CD8-positive, alpha-beta T cell (primary cell): ENCODE measurements at regions of chr1 and their contacts with region 1.

Region 1: DNA sequence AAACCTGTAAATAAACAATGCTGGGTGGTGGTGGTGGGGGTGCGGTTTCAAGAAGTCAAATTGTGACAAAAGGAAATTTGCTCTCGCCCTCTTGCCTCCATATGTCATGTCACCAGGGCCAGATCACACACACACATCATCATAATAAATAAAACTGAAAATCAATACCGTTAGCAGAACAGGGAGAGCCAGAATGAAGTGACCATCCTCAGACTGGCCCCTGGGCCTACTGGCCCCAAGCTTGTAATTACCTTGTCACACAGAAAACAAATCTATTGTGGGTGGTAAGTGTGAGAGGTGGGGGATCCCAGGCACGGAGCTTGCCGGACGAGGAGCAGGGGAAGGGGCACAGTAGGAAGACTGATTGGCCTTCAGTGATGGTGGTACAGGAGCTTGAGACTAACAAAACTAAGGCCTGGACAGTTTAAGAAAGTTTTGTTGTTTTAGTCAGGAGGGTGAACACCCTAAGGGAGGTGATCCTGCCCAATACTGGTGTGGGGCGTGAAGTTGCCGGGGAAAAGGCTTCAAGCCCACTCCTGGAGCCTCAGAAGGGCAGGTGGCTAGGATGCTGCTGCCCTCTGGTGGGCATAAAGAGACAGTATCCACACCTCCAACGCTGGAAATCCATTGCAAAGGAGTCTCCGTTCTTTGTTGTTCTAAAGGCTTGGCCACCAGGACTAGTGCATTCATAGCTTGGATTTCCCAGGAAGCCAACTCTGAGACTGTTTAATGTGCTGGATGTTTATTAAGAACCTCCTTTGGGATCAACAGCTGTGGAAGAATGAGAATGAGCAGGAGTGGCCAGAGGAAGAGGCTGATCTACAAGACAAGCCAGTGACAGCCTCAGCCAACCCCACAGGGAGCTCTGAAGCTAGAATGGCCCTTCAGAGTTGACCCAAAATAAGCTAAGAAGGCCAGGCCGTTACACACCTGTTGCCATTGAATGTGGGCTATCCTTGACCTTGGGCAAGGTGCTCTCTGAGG is 8.1 kb upstream of the C1orf216 start:
- DNase-seq: peak in 8 of 9 experiments; percentile 30 to 79 (median 53)
- ATAC-seq: peak; percentile 90
- H3K4me3 ChIP-seq: no peak overlapping the region
- H3K4me3 Mint-ChIP-seq: no peak overlapping the region
- H3K27ac ChIP-seq: no peak overlapping the region
- H3K27ac Mint-ChIP-seq: no peak overlapping the region
- H3K4me1 ChIP-seq: no peaks in the 10 kb centered on the region
- H3K4me1 Mint-ChIP-seq: no peaks in the 10 kb centered on the region
- H3K27me3 ChIP-seq: no peaks in the 10 kb centered on the region
- H3K27me3 Mint-ChIP-seq: no peaks in the 10 kb centered on the region
- CTCF ChIP-seq: peak; percentile 87

Region 2: DNA sequence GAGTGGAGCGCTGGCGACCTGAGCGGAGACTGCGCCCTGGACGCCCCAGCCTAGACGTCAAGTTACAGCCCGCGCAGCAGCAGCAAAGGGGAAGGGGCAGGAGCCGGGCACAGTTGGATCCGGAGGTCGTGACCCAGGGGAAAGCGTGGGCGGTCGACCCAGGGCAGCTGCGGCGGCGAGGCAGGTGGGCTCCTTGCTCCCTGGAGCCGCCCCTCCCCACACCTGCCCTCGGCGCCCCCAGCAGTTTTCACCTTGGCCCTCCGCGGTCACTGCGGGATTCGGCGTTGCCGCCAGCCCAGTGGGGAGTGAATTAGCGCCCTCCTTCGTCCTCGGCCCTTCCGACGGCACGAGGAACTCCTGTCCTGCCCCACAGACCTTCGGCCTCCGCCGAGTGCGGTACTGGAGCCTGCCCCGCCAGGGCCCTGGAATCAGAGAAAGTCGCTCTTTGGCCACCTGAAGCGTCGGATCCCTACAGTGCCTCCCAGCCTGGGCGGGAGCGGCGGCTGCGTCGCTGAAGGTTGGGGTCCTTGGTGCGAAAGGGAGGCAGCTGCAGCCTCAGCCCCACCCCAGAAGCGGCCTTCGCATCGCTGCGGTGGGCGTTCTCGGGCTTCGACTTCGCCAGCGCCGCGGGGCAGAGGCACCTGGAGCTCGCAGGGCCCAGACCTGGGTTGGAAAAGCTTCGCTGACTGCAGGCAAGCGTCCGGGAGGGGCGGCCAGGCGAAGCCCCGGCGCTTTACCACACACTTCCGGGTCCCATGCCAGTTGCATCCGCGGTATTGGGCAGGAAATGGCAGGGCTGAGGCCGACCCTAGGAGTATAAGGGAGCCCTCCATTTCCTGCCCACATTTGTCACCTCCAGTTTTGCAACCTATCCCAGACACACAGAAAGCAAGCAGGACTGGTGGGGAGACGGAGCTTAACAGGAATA is 149.4 kb before region 1 on chr1:
- CTCF ChIA-PET with region 1: interaction called, 48 read pairs
- POLR2A ChIA-PET with region 1: interaction called, 3 read pairs
- intact Hi-C with region 1: no loop called
- DNase-seq: peak; percentile 27 to 85 (median 71)
- ATAC-seq: peak; percentile 78
- H3K4me3 ChIP-seq: peak overlapping the region; percentile 49 to 87
- H3K4me3 Mint-ChIP-seq: peak overlapping the region; percentile 90
- H3K27ac ChIP-seq: peak overlapping the region; percentile 4 to 54
- H3K27ac Mint-ChIP-seq: peak overlapping the region; percentile 82
- H3K4me1 ChIP-seq: peaks cover 24% of the 10 kb centered on the region
- H3K4me1 Mint-ChIP-seq: peaks cover 26% of the 10 kb centered on the region
- H3K27me3 ChIP-seq: no peaks in the 10 kb centered on the region
- H3K27me3 Mint-ChIP-seq: peaks cover 3% of the 10 kb centered on the region
- CTCF ChIP-seq: no peak

Region 3: GRCh38 chr1:35644204-35644603 is 82.5 kb before region 1 on chr1:
- CTCF ChIA-PET with region 1: no interaction called
- POLR2A ChIA-PET with region 1: no interaction called
- intact Hi-C with region 1: no loop called
- DNase-seq: no peak
- ATAC-seq: no peak
- H3K4me3 ChIP-seq: no peak overlapping the region
- H3K4me3 Mint-ChIP-seq: no peak overlapping the region
- H3K27ac ChIP-seq: no peak overlapping the region
- H3K27ac Mint-ChIP-seq: no peak overlapping the region
- H3K4me1 ChIP-seq: peaks cover 15% of the 10 kb centered on the region
- H3K4me1 Mint-ChIP-seq: peaks cover 21% of the 10 kb centered on the region
- H3K27me3 ChIP-seq: peaks cover 0 to 8% of the 10 kb centered on the region in 2 experiments
- H3K27me3 Mint-ChIP-seq: peaks cover 19% of the 10 kb centered on the region
- CTCF ChIP-seq: no peak

Region 4: DNA sequence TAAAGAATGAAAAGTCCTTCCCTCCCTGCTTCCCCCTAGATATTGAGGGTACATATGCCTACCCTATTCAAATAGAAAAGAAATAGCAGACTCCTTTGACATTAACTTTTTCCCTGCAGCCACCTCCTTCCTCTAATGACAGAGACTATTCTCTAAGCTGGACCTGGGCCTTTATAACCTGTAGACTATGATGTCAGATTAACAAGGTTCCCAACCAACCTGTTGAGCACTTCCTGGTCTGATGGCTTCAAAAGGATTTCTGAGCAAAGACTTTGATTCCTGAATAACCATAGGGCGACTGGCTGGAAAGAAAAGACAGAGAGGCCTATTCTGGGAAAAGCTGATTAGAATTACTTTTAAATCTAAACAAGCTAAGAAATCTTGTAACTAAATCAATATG is 10.4 kb after region 1 on chr1:
- CTCF ChIA-PET with region 1: interaction called, 61 read pairs
- POLR2A ChIA-PET with region 1: no interaction called
- intact Hi-C with region 1: no loop called
- DNase-seq: no peak
- ATAC-seq: no peak
- H3K4me3 ChIP-seq: no peak overlapping the region
- H3K4me3 Mint-ChIP-seq: no peak overlapping the region
- H3K27ac ChIP-seq: no peak overlapping the region
- H3K27ac Mint-ChIP-seq: no peak overlapping the region
- H3K4me1 ChIP-seq: no peaks in the 10 kb centered on the region
- H3K4me1 Mint-ChIP-seq: no peaks in the 10 kb centered on the region
- H3K27me3 ChIP-seq: no peaks in the 10 kb centered on the region
- H3K27me3 Mint-ChIP-seq: no peaks in the 10 kb centered on the region
- CTCF ChIP-seq: no peak

Region 5: DNA sequence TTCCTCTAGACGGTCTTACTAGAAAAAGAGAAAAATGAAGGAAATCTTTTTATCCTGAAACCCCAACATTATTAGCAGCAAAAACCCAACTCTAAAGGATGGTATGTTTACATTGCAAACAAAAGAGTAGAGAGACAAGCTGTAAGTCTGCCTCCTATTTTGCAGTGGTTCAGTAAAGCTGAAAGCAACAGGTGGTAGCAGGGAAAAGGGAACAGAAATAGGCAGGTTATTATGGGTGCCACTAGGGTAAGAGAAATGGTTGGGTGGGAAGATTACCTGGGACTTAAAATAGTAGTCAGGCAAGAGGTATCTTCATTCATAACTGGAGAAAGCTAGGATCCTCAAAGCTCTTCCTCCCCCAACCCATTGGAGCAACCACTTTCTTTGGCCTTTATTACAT is 29.3 kb after region 1 on chr1:
- CTCF ChIA-PET with region 1: interaction called, 14 read pairs
- POLR2A ChIA-PET with region 1: no interaction called
- intact Hi-C with region 1: no loop called
- DNase-seq: no peak
- ATAC-seq: no peak
- H3K4me3 ChIP-seq: no peak overlapping the region
- H3K4me3 Mint-ChIP-seq: no peak overlapping the region
- H3K27ac ChIP-seq: no peak overlapping the region
- H3K27ac Mint-ChIP-seq: no peak overlapping the region
- H3K4me1 ChIP-seq: no peaks in the 10 kb centered on the region
- H3K4me1 Mint-ChIP-seq: no peaks in the 10 kb centered on the region
- H3K27me3 ChIP-seq: no peaks in the 10 kb centered on the region
- H3K27me3 Mint-ChIP-seq: no peaks in the 10 kb centered on the region
- CTCF ChIP-seq: no peak

Region 6: GRCh38 chr1:35777109-35777508 is 50.4 kb after region 1 on chr1:
- CTCF ChIA-PET with region 1: interaction called, 18 read pairs
- POLR2A ChIA-PET with region 1: no interaction called
- intact Hi-C with region 1: loop called (anchors 1 kb)
- DNase-seq: no peak
- ATAC-seq: no peak
- H3K4me3 ChIP-seq: no peak overlapping the region
- H3K4me3 Mint-ChIP-seq: no peak overlapping the region
- H3K27ac ChIP-seq: no peak overlapping the region
- H3K27ac Mint-ChIP-seq: peak overlapping the region; percentile 8
- H3K4me1 ChIP-seq: peaks cover 5% of the 10 kb centered on the region
- H3K4me1 Mint-ChIP-seq: peaks cover 8% of the 10 kb centered on the region
- H3K27me3 ChIP-seq: no peaks in the 10 kb centered on the region
- H3K27me3 Mint-ChIP-seq: no peaks in the 10 kb centered on the region
- CTCF ChIP-seq: no peak

Region 7: GRCh38 chr1:36034692-36035091 is 307.9 kb after region 1 on chr1:
- CTCF ChIA-PET with region 1: no interaction called
- POLR2A ChIA-PET with region 1: no interaction called
- intact Hi-C with region 1: no loop called
- DNase-seq: no peak
- ATAC-seq: no peak
- H3K4me3 ChIP-seq: no peak overlapping the region
- H3K4me3 Mint-ChIP-seq: no peak overlapping the region
- H3K27ac ChIP-seq: no peak overlapping the region
- H3K27ac Mint-ChIP-seq: no peak overlapping the region
- H3K4me1 ChIP-seq: no peaks in the 10 kb centered on the region
- H3K4me1 Mint-ChIP-seq: no peaks in the 10 kb centered on the region
- H3K27me3 ChIP-seq: no peaks in the 10 kb centered on the region
- H3K27me3 Mint-ChIP-seq: no peaks in the 10 kb centered on the region
- CTCF ChIP-seq: no peak